PC-9 (cell line): ENCODE measurements at regions of chr1 and their contacts with region 1.

Region 1: GRCh38 chr1:47437447-47438164 is at the start of gene FOXD2:
- DNase-seq: peak; percentile 77 to 94
- H3K4me3 ChIP-seq: peak within 1 kb of the TSS; percentile 68
- H3K27ac ChIP-seq: peak within 1 kb of the TSS; percentile 56
- H3K4me1 ChIP-seq: 0 out of 2 replicates have a peak, but pooled peaks cover 6% of the 10 kb centered on the region
- H3K27me3 ChIP-seq: no peaks in the 10 kb centered on the region
- CTCF ChIP-seq: peak; percentile 86
- total RNA-seq, gene FOXD2: 0.35 and 0.48 TPM in 2 replicates

Region 2: GRCh38 chr1:47192458-47193384 is 244.9 kb before region 1 on chr1:
- CTCF ChIA-PET with region 1: interaction called, 3 read pairs
- POLR2A ChIA-PET with region 1: interaction called, 3 read pairs
- intact Hi-C with region 1: loop called (anchors 5 kb)
- DNase-seq: peak; percentile 57 to 69
- H3K4me3 ChIP-seq: no peak overlapping the region
- H3K27ac ChIP-seq: no peak overlapping the region
- H3K4me1 ChIP-seq: no peaks in the 10 kb centered on the region
- H3K27me3 ChIP-seq: no peaks in the 10 kb centered on the region
- CTCF ChIP-seq: peak; percentile 95

Region 3: GRCh38 chr1:47325530-47325929 is 112.1 kb before region 1 on chr1:
- CTCF ChIA-PET with region 1: no interaction called
- POLR2A ChIA-PET with region 1: interaction called, 33 read pairs
- intact Hi-C with region 1: no loop called
- DNase-seq: peak in 1 of 2 experiments; percentile 95
- H3K4me3 ChIP-seq: no peak overlapping the region
- H3K27ac ChIP-seq: peak overlapping the region; percentile 88
- H3K4me1 ChIP-seq: peaks cover 8% of the 10 kb centered on the region
- H3K27me3 ChIP-seq: no peaks in the 10 kb centered on the region
- CTCF ChIP-seq: no peak

Region 4: GRCh38 chr1:47405697-47406096 is 31.9 kb before region 1 on chr1:
- CTCF ChIA-PET with region 1: interaction called, 15 read pairs
- POLR2A ChIA-PET with region 1: no interaction called
- intact Hi-C with region 1: no loop called
- DNase-seq: no peak
- H3K4me3 ChIP-seq: no peak overlapping the region
- H3K27ac ChIP-seq: no peak overlapping the region
- H3K4me1 ChIP-seq: no peaks in the 10 kb centered on the region
- H3K27me3 ChIP-seq: no peaks in the 10 kb centered on the region
- CTCF ChIP-seq: no peak

Region 5: DNA sequence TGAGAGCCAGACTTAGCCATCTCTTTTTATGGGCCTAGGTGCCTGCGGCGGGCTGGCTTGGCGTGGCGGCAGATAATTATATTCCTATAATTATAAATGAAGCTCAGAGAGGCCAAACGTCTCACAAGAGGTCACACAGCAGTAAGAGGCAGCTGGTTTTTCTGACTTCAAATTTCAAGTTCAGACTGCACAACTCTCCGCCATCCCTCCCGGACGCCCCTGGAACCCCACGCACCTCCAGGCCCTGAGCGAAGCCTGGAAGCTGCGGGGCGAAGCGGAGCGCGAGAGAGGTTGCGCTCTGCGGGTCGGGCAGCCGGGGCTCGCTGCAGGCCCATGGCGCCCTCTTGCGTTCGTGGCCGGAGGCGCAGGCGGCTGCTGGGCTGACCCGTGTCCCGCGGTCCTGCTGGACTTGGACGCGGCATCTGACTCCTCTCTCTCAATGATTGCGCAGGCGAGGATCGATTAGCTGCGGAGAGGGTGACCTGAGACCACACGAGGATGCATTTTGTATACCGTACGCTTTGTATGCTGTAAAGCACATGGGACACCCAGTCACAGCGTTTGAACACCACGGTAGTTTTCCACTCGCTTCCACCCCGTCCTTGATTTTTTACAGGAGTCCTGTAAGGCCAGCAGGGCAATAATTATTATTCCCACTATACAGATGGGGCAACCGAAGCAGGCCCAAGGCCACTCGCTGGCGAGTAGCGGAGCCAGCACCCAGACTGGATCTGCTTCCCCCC is 272.9 kb after region 1 on chr1:
- CTCF ChIA-PET with region 1: interaction called, 11 read pairs
- POLR2A ChIA-PET with region 1: no interaction called
- intact Hi-C with region 1: loop called (anchors 1 kb)
- DNase-seq: peak; percentile 49 to 78
- H3K4me3 ChIP-seq: peak overlapping the region; percentile 32; the same call in 1 of the 2 replicates
- H3K27ac ChIP-seq: no peak overlapping the region
- H3K4me1 ChIP-seq: no peaks in the 10 kb centered on the region; the same call in 1 of the 2 replicates
- H3K27me3 ChIP-seq: peaks cover 33% of the 10 kb centered on the region
- CTCF ChIP-seq: peak; percentile 96